ENCODE measurements at regions of chr6 and their contacts with region 1.

Region 1: DNA sequence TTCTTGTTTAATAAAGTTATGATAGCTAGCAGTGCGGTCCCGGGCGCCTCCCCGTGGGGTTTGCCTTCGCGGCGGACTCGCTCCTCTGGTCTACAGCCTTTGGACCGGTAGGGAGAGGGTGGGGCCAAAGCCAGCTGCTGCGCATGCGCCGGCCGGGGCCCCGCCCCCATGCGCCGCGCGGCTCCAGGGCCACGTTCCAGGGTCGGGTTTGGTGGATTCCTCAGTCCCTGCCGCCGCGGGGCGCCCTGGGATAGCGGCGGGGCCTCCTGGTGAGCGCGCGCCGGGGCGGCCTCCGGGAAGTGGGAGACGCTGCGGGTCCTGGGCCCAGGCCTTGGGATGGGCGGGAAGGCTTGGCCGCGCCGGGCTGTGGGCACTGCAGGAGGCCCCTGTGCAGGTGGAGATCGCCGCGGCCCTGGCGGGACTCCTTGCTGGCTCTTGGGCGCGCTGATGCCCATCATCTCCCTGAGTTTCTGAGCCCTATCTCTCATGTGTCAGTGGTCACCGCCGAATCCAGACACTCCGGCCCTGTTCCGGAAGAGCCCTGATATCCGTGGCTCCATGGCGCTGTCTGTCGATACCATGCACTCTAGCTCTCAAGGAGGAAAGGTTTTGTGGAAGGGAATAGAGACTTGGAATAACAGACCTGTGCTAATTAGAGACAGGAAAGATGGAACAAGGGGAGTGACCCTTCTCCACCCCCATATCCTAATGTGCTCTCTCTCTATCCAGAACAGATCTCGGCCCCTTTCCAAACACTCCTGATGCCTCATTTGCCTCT is at the start of gene VARS2:
- DNase-seq: peak; percentile 92 to 99 (median 97)
- ATAC-seq: peak; percentile 90 to 97 (median 96)
- H3K4me3 ChIP-seq: peak within 1 kb of the TSS; percentile 53 to 65 (median 58)
- H3K27ac ChIP-seq: peak within 1 kb of the TSS; percentile 72 to 94 (median 87)
- H3K4me1 ChIP-seq: peaks cover 0 to 17% (median 12%) of the 10 kb centered on the region in 3 donors
- H3K27me3 ChIP-seq: no peaks in the 10 kb centered on the region
- CTCF ChIP-seq: peak in 2 of 4 donors; percentile 9 to 15
- total RNA-seq, gene VARS2: 11.3 to 25.8 (median 17.1) TPM

Region 2: GRCh38 chr6:30836431-30836866 is 77.8 kb before region 1 on chr6:
- intact Hi-C with region 1: loop called in 1 of 3 experiments (anchors 10 kb)
- DNase-seq: peak in 3 of 6 donors; percentile 1 to 27 (median 18)
- ATAC-seq: peak in 3 of 4 donors; percentile 32 to 80 (median 57)
- H3K4me3 ChIP-seq: no peak overlapping the region
- H3K27ac ChIP-seq: no peak overlapping the region
- H3K4me1 ChIP-seq: no peaks in the 10 kb centered on the region
- H3K27me3 ChIP-seq: no peaks in the 10 kb centered on the region
- CTCF ChIP-seq: no peak

Region 3: DNA sequence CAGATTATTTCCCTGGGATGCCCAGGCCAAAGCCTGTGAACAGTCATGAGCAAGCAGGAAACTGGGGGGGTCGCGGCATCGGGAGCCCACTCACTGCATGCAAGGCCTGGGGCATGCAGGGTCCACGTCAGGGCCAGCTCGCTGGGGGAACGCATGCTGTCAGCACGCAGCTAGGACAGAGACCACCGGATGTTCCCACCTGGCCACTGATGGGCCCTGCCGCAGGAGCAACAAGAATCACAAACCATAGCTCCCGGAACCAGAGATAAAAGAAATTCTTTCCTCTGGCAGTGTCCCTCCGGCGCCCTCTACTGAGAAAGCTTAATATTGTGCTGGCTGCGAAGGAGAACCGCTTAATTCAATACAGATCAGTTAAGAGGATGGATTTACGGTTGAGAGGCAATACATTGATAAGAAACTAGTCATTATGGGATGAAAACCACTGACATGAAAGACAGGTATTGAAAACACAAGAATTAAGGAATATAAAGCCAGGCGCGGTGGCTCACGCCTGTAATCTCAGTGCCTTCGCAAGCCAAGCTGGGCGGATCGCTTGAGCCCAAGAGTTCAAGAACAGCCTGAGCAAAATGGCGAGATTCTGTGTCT is 165.5 kb after region 1 on chr6:
- intact Hi-C with region 1: loop called in 2 of 3 experiments (anchors 5 to 10 kb)
- DNase-seq: peak; percentile 39 to 75 (median 58)
- ATAC-seq: peak; percentile 71 to 96 (median 92)
- H3K4me3 ChIP-seq: no peak overlapping the region
- H3K27ac ChIP-seq: no peak overlapping the region
- H3K4me1 ChIP-seq: no peaks in the 10 kb centered on the region
- H3K27me3 ChIP-seq: no peaks in the 10 kb centered on the region
- CTCF ChIP-seq: peak; percentile 29 to 72 (median 60)